ENCODE measurements at regions of chr6 and their contacts with region 1.

Region 1: GRCh38 chr6:119791746-119792145 is 442.2 kb upstream of the MAN1A1 start:
- DNase-seq: peak; percentile 20
- ATAC-seq: peak; percentile 55
- H3K4me3 ChIP-seq: no peak overlapping the region
- H3K27ac ChIP-seq: no peak overlapping the region
- H3K4me1 ChIP-seq: no peaks in the 10 kb centered on the region
- H3K27me3 ChIP-seq: no peaks in the 10 kb centered on the region
- CTCF ChIP-seq: no peak

Region 2: DNA sequence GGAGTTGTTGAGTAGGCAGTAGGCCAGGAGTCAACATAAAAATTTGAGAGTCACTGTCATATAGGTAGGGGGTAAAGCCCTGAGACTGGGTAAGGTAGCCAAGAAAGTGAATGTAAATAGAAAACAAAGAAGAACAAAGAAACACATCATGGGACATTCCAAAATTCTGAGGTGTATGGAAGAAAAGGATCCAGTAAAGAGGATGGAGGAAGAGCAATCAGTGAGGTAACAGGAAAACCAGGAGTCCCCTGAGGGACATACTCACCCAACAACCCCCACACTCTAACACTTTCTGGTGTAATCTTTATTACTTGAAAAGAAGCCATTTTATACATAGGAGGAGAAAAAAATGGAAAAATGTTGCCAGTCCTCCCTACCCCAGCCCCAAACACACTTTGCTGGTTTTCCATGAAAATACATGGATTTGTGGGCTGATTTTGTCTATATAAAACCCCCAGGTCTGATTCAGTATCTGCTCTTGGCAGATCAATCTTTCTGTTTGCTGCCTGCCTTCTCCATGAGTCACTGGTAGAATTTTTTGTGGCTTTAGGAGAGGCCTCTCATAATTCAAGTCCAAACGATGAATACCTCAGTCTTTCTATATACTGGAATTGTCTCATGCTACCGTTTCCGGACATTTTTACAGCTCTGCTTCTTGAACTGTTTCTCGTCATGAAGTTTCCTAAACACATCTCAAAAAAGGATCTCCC is 170.7 kb before region 1 on chr6:
- CTCF ChIA-PET with region 1: no interaction called
- POLR2A ChIA-PET with region 1: interaction called, 10 read pairs
- intact Hi-C with region 1: no loop called
- DNase-seq: peak; percentile 89
- ATAC-seq: peak; percentile 88
- H3K4me3 ChIP-seq: peak overlapping the region; percentile 52; the same call in 1 of the 2 replicates
- H3K27ac ChIP-seq: peak overlapping the region; percentile 97
- H3K4me1 ChIP-seq: peaks cover 37% of the 10 kb centered on the region
- H3K27me3 ChIP-seq: no peaks in the 10 kb centered on the region
- CTCF ChIP-seq: no peak

Measured in PC-3 (cell line).